GM13977 (cell line): ENCODE measurements at regions of chr13 and their contacts with region 1.

Region 1: GRCh38 chr13:30132623-30133553 is 174.5 kb downstream of the KATNAL1 start:
- DNase-seq: peak; percentile 89
- CTCF ChIP-seq: peak; percentile 93

Region 2: DNA sequence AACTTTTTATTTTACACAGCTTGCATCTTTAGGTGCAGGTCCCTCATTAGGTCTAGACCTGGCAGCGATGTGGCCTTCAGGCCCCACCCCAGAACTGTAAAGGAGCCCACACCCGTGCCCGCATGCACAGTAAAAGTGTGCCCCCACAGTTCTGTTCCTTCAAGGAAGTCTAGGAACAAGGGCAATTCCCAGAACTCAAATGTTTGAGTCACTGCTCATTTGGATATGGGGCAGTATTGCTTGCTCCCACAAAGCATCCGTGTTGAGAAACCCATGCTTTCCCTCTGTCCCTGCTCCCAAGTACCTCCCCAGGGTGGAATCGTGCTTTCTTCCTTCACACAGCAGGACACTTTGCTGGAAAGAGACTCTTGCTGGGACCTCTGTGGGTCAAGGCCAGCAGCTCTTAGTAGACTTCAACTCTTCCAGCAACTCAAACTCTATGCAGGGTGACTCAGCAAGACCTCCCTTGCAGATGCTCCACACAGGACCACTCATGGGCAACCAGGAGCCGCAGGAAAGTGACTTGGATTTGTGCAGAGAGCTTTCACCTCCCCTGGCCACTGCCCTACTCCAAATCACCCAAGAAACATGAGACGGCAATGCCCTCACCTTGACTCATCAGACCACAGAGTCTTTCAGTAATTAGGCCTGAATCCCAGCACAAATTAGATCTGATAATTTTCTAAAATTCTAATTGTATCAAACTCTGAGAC is 549.7 kb before region 1 on chr13:
- in situ Hi-C with region 1: no loop called
- DNase-seq: no peak
- CTCF ChIP-seq: no peak

Region 3: DNA sequence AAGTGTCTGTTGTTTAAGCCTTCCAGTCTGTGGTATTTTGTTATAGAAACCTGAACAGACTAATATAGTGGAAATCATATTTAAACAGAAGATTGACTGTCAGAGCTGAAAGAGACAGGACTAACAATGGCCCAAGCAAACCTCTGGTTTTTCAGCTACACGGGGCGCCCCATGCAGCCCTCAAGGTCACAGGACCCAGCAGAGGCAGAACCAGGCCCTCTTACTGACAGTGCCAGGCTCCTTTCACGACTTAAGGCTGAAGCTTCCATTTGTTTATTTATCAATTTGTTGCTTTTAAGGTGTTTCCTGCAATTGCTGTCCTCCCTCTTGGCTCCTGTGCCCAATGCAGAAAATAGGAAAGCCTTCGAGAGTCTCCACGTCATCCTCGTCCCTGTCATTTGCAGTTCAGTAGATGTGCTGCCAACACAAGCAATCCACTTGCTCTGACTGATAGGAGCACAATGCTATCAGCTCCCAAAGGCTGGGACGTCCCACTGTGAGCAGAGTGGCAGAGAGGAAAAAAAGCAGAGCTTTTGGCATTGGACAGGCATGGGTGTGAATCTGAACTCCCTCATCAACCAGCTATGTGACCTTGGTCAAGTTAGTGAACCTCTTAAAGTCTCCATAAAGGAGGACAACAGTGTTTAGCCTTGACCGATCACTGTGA is 526.9 kb before region 1 on chr13:
- in situ Hi-C with region 1: no loop called
- DNase-seq: no peak
- CTCF ChIP-seq: no peak

Region 4: GRCh38 chr13:29676941-29677452 is 455.9 kb before region 1 on chr13:
- in situ Hi-C with region 1: no loop called
- DNase-seq: no peak
- CTCF ChIP-seq: no peak

Region 5: GRCh38 chr13:30006246-30006645 is 126.6 kb before region 1 on chr13:
- in situ Hi-C with region 1: no loop called
- DNase-seq: no peak
- CTCF ChIP-seq: no peak

Region 6: GRCh38 chr13:30334663-30335386 is 201.9 kb after region 1 on chr13:
- in situ Hi-C with region 1: loop called (anchors 10 kb)
- DNase-seq: peak; percentile 45
- CTCF ChIP-seq: peak; percentile 57

Region 7: DNA sequence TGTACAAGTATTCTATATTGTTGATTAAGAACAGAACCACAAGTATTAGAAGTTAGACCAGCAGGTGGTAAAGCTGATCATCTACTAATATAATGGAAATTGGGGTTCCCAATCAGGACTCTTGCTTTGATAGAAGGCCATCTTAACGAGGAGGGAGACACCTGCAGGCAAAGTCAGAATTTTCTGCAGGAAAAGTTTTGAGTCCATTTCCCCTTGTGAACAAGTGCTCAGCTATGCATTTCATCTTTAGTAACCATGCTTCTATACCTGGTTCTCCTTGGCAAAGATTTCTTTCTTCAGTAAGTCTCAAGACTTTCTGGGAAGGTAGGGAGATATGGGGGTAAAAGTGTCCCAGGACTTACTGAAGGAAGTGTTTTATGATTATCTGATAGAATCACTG is 448.7 kb after region 1 on chr13:
- in situ Hi-C with region 1: loop called (anchors 10 kb)
- DNase-seq: peak; percentile 27
- CTCF ChIP-seq: peak; percentile 45

Region 8: DNA sequence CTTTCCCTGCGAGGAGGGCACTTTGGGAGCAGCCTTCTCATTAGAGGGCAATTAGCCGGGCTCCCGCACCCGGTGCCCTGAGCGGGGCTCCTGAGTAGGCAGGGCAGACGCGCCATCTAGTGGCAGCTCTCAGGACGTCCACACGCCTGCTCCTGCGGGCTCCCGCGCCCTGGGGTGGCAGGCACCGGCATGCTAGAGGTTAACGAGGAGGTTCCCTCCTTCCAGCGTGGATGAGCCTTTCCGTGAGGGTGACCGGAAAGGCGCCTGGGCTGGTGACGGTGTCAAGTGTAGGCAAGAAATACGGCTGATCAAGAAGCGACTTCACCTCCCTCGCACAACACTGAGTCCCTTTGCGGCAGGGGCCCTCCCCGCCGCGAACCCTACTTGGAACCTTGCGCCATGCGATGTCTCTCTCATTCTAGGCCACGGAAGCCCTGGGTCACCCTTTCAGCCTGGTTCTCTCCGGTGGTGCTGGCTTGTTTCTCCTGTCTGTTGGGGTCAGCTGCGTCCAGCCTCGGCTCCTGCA is 670.1 kb after region 1 on chr13:
- in situ Hi-C with region 1: loop called (anchors 25 kb)
- DNase-seq: peak; percentile 76
- CTCF ChIP-seq: peak; percentile 97